ENCODE measurements at regions of chr4 and their contacts with region 1.

Region 1: DNA sequence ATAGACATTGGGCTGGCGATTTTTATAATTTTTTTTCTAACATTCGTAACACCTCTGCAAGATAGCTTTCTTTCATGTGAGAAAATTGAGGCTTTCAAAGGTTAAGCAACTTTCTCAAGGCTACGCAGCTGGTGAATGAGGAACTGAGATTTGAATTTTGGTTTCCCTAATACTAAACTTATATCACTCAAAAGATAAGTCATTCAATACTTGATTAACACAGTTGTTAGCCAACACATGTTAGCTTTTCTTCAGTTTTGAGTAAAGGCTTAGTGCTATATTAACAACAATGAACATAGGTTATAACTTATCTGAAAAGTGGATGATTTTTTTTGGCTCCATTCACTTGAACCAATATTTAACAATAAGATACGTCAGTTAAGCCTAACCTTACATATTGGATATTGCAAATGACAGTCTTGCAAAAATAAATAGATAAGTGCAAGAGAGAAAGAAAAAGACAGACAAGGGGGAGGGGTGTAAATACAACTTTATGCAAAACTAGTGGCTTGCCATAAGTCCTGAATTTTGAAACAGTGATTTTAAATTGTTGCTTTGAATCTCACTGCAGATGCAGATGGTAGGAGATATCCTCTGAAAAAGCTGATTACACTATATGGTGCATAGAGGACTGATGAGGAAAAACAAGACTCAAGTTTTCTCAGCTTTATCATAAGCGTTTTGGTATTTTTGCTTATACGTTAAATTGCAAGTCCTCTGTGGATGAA is 11.1 kb upstream of the GPM6A start:
- DNase-seq: peak; percentile 86
- H3K4me3 ChIP-seq: peak overlapping the region; percentile 42
- H3K27ac ChIP-seq: peak overlapping the region; percentile 91
- H3K4me1 ChIP-seq: peaks cover 64% of the 10 kb centered on the region
- CTCF ChIP-seq: no peak

Region 2: DNA sequence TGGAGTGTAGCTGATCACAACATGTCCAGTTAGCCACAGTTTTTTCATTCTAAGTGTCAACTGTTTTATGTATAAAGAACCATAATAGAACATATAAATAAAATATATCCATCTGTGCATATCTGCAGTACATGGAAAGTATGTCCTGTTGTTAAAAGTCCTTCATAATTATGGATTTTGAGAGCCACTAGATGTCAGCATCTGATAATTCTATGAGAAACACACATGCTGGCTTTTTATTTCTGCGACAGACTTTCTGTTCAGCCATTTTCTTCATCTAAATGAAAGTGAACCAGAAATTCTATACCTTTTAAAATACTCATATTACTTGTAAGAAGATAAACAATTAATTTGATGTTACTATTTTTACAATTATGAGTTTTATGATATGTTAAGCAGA is 262.6 kb before region 1 on chr4:
- CTCF ChIA-PET with region 1: no interaction called
- POLR2A ChIA-PET with region 1: no interaction called
- intact Hi-C with region 1: loop called (anchors 5 kb)
- DNase-seq: peak; percentile 58
- H3K4me3 ChIP-seq: no peak overlapping the region
- H3K27ac ChIP-seq: no peak overlapping the region
- H3K4me1 ChIP-seq: peaks cover 8% of the 10 kb centered on the region
- CTCF ChIP-seq: peak; percentile 77

Region 3: DNA sequence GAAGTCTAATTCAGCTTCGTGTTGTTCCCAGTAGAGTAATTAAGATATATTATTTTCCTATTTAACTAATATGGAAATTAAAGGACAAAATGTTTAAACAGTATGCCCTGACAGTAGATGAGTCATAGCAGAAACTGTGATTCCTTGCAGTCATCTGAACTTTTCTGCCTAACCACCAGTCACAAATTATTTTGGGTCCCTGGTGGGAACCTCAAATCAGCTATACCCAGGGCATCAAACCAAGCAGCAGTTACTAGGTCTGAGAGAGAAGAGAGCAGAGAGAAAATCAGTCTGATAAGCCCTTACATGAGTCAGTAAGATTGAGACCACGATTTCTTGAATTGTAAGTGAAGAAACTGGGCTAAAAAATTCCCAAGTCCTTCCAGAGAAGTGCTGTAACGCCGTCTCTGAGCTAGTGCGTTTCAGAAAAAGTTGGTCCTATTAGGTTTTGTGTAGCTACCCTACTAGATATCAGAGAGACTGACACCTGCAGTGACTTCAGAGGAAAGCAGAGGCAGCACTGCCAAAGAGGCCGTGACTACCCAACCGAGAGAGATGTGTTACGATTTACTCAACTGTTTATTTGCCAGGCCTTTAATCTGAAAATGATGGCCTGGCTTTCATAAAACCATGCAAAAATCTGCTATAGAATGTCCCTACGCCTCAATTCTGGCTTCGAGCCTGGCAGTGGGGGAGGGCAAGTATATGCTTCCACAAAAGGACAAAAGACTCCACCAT is 10.6 kb after region 1 on chr4:
- CTCF ChIA-PET with region 1: interaction called, 4 read pairs
- POLR2A ChIA-PET with region 1: interaction called, 28 read pairs
- intact Hi-C with region 1: no loop called
- DNase-seq: peak; percentile 73
- H3K4me3 ChIP-seq: peak overlapping the region; percentile 44
- H3K27ac ChIP-seq: peak overlapping the region; percentile 75
- H3K4me1 ChIP-seq: peaks cover 25% of the 10 kb centered on the region
- CTCF ChIP-seq: no peak; the same call in 1 of the 2 replicates

Region 4: GRCh38 chr4:175891851-175892250 is 68.7 kb after region 1 on chr4:
- CTCF ChIA-PET with region 1: no interaction called
- POLR2A ChIA-PET with region 1: interaction called, 4 read pairs
- intact Hi-C with region 1: loop called (anchors 5 kb)
- DNase-seq: peak; percentile 68
- H3K4me3 ChIP-seq: no peak overlapping the region
- H3K27ac ChIP-seq: no peak overlapping the region
- H3K4me1 ChIP-seq: peaks cover 6% of the 10 kb centered on the region
- CTCF ChIP-seq: peak; percentile 81